AG04450 (cell line): ENCODE measurements at regions of chr20 and their contacts with region 1.

Region 1: DNA sequence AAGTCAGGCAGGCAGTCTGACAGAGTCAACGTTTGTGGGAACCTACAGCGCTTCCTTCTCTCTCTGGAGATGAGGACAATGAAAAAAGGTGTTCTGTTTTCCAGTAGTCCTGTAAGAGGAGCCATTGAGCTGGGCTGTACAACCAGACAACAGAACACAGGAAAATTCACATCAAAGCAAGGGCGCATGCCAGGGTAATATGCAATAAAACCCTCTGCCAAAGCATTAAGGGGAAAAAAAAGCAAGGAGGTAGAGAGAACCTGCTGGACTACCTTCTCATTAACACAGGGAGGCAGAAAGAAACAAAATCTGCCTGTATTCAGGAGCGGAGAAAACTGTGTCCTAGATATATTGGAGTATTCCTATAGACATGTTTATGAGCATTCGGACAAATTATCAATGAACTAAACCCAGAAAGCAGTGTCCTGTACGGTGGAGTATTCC is 1.3 kb downstream of the RNF24 start:
- DNase-seq: peak; percentile 47
- H3K4me3 ChIP-seq: peak overlapping the region; percentile 92
- H3K27ac ChIP-seq: peak overlapping the region; percentile 21
- H3K27me3 ChIP-seq: no peaks in the 10 kb centered on the region
- CTCF ChIP-seq: peak; percentile 81

Region 2: GRCh38 chr20:2340136-2340535 is 1673.9 kb before region 1 on chr20:
- CTCF ChIA-PET with region 1: no interaction called
- POLR2A ChIA-PET with region 1: no interaction called
- DNase-seq: no peak
- H3K4me3 ChIP-seq: no peak overlapping the region
- H3K27ac ChIP-seq: no peak overlapping the region
- H3K27me3 ChIP-seq: peaks cover 2% of the 10 kb centered on the region
- CTCF ChIP-seq: no peak

Region 3: GRCh38 chr20:4084721-4085120 is 70.7 kb after region 1 on chr20:
- CTCF ChIA-PET with region 1: interaction called, 16 read pairs
- POLR2A ChIA-PET with region 1: interaction called, 13 read pairs
- DNase-seq: no peak
- H3K4me3 ChIP-seq: no peak overlapping the region
- H3K27ac ChIP-seq: no peak overlapping the region
- H3K27me3 ChIP-seq: no peaks in the 10 kb centered on the region
- CTCF ChIP-seq: no peak